Dendritic cell treated with granulocyte-macrophage colony-stimulating factor and Interleukin-4, amounts not matched to agents 40 ng/mL and 50 ng/mL, for 4 days (primary cell): ENCODE measurements at regions of chr11 and their contacts with region 1.

Region 1: DNA sequence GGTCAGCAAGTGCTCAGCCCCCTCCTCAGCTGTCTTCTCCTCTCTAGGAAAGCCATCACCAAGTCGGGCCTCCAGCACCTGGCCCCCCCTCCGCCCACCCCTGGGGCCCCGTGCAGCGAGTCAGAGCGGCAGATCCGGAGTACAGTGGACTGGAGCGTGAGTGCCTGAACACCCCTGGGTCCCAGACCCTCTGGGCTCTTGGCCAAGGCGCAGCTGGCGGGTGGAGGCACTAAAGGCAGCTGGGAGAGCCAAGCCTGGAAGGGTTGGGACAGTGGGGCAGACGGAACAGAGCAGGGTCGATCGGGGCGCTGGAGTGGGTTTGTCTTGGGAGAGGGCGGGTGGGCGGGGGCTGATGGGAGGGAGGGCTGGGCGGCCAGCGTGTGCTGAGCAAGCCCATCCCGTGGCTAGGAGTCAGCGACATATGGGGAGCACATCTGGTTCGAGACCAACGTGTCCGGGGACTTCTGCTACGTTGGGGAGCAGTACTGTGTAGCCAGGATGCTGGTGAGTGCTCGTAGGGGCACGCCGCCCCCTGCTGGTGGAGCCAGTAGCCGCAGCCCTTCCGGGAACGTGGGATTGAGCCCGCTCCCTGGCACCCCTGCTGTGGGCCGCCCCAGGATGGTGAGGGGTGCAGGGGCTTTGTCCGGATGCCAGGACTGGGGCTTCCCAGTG is 14.1 kb upstream of the MDK start:
- H3K4me3 Mint-ChIP-seq: no peak overlapping the region
- H3K27ac Mint-ChIP-seq: no peak overlapping the region
- H3K4me1 Mint-ChIP-seq: peaks cover 52% of the 10 kb centered on the region
- H3K27me3 Mint-ChIP-seq: no peaks in the 10 kb centered on the region

Region 2: DNA sequence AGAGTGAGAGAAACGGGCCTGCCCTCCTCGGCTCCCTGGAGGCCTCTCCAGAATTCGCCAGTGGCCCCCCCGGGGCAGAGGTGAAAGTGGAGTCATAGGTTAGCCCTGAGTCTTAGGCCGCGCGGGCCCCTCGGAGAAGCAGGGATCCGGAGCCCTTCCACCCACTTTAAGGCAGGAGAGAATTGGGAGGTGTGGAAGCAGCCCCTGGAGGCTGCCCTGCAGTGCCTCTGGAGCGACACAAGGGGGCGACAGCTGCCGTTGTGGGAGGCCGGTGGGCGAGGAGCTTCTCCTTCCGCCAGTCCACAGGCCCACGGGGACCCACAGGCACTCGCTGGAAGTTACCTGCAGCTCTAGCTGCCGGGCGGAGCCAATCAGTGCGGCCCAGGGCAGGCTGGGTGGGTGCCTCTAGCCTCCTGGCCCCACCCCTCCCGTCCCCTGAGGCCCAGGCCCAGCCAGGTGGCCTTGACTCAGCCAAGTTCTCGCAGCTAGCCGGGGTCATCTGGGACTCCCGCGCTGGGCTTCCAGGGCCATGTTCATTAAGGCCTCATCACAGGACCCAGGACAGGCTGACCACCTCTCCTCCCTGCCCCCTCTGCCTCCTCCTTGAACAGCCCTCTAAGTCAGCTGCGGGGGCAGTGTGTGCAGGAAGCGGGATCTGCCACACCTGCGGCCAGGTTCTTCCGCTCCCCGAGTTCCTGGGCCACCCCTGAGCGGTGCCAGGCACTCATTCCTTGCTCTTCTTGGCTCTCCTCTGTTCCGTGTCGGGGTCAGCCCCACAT is 15.1 kb before region 1 on chr11:
- intact Hi-C with region 1: loop called (anchors 1 kb)
- H3K4me3 Mint-ChIP-seq: no peak overlapping the region
- H3K27ac Mint-ChIP-seq: peak overlapping the region; percentile 39
- H3K4me1 Mint-ChIP-seq: peaks cover 85% of the 10 kb centered on the region
- H3K27me3 Mint-ChIP-seq: no peaks in the 10 kb centered on the region